Right cardiac atrium (tissue), 5 donors: ENCODE measurements at regions of chr19 and their contacts with region 1.

Region 1: DNA sequence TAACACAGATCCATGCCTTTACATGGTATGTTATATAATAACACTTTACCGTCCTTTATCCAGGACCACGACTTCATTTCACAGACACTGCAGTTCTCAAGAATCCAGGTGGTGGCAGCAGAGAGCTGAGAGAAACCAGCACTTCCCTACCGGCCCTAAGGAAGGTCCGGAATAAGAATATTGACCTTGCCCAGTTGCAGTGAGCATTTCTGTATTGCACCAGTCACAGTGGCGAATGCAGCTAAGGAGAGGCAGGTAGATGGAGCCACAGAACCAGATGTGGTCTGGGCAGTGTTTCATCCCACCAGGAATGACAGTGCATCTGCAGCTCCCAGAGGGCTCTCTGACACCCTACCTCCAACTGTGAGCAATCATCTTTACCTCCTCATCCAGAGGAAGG is 44.6 kb downstream of the ZNF787 start:
- DNase-seq: peak in 2 of 3 donors; percentile 65 to 79
- ATAC-seq: peak; percentile 44 to 59
- H3K4me3 ChIP-seq: no peak overlapping the region
- H3K27ac ChIP-seq: no peak overlapping the region
- H3K4me1 ChIP-seq: no peaks in the 10 kb centered on the region
- H3K27me3 ChIP-seq: no peaks in the 10 kb centered on the region

Region 2: GRCh38 chr19:55955826-55956225 is 120.7 kb before region 1 on chr19:
- intact Hi-C with region 1: no loop called
- DNase-seq: no peak
- ATAC-seq: no peak
- H3K4me3 ChIP-seq: no peak overlapping the region
- H3K27ac ChIP-seq: no peak overlapping the region
- H3K4me1 ChIP-seq: no peaks in the 10 kb centered on the region
- H3K27me3 ChIP-seq: no peaks in the 10 kb centered on the region

Region 3: GRCh38 chr19:56170261-56170660 is 93.8 kb after region 1 on chr19:
- intact Hi-C with region 1: loop called in 3 of 4 experiments (anchors 2 to 5 kb)
- DNase-seq: no peak
- ATAC-seq: peak in 1 of 2 donors; percentile 39
- H3K4me3 ChIP-seq: no peak overlapping the region
- H3K27ac ChIP-seq: no peak overlapping the region
- H3K4me1 ChIP-seq: no peaks in the 10 kb centered on the region
- H3K27me3 ChIP-seq: no peaks in the 10 kb centered on the region

Region 4: DNA sequence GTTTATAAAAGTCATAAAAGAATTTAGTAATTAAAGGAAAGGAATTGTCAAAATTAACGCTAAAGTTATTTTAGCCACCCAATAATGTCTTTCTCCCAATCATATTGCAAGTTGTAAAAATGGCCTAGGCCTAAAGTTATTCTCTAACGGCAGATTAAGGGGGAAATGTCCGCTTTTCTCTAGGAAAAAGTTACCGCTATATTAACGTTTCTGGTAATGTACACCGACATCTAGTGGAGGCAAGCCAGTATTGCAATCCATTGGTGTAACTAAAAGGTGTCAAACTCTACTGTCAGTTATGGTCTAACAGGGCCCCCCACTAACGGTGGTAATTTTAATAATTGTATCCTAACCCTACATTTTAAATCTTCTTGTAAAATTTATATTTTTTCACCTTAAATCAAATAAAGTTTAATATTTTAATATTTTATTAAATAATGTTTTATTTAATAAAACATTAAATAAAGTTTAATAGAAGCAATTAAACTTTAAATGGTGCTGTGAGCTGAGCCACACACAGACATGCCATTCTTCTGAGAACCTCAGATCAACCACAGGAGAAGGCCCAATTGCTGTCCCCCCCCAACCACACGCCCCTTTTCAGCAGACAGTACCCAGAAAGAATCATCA is 274.0 kb after region 1 on chr19:
- intact Hi-C with region 1: loop called in 3 of 4 experiments (anchors 5 to 10 kb)
- DNase-seq: peak in 1 of 3 donors; percentile 48
- ATAC-seq: peak in 1 of 2 donors; percentile 55
- H3K4me3 ChIP-seq: no peak overlapping the region
- H3K27ac ChIP-seq: no peak overlapping the region
- H3K4me1 ChIP-seq: no peaks in the 10 kb centered on the region
- H3K27me3 ChIP-seq: no peaks in the 10 kb centered on the region